Transverse colon (tissue), 4 donors: ENCODE measurements at regions of chr5 and their contacts with region 1.

Region 1: GRCh38 chr5:143403593-143404415 is at the start of gene NR3C1:
- DNase-seq: peak; percentile 88
- H3K4me3 ChIP-seq: peak within 1 kb of the TSS; percentile 64 to 90 (median 86)
- H3K27ac ChIP-seq: peak within 1 kb of the TSS; percentile 96 to 99 (median 98)
- H3K4me1 ChIP-seq: peaks cover 0 to 33% (median 12%) of the 10 kb centered on the region in 4 donors
- H3K27me3 ChIP-seq: peaks cover 3% of the 10 kb centered on the region
- CTCF ChIP-seq: peak in 4 of 5 experiments; percentile 39 to 61 (median 52)
- EP300 ChIP-seq: no peak
- POLR2A ChIP-seq: peak; percentile 56
- total RNA-seq, gene NR3C1: 8.4 to 37.7 (median 30.3) TPM

Region 2: DNA sequence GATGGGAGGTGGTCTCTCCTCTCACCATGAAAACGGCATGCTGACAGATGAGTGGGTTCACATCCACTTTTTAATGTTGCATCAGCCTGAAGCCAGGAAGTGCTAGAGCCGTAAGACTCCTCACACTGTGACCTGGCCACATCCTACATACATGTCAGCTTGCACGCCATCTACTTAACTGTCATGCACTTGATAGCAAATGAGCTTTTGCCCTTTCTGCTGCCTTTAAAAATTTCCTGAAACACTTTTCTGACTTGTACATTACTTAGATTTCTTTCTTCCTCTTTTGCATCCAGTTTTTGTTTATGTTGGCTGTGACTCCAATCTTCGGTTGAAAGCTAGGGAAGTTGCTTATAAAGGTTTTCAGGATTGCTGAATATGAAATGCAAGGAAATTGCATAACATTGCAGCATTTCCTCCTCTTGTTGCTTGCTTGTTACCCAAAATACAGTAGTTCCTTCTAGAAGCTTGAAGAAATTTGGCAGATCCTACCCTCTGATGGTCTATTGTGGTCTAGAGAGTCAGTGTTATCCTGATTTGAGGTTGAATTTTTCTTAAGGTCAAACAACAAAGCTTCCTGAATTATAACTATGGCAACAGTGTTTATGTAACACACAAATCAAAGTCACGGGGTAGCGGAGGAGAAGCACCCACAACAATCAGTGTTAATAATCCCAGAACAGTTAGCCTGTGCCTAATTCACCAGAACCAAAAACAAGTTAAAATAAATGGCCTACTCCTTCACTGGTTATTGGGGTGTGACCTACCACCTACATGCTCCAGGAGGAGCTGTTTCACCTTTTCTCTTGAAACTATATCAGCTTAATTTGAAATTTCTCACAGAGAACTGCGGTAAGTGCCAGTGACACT is 401.1 kb before region 1 on chr5:
- in situ Hi-C with region 1: loop called in 1 of 4 experiments (anchors 25 kb)
- intact Hi-C with region 1: no loop called
- DNase-seq: peak; percentile 54
- H3K4me3 ChIP-seq: no peak overlapping the region
- H3K27ac ChIP-seq: peak overlapping the region; percentile 34 to 71 (median 53)
- H3K4me1 ChIP-seq: peaks cover 0 to 33% (median 10%) of the 10 kb centered on the region in 4 donors
- H3K27me3 ChIP-seq: no peaks in the 10 kb centered on the region
- CTCF ChIP-seq: peak; percentile 29 to 44 (median 36)
- EP300 ChIP-seq: no peak
- POLR2A ChIP-seq: no peak

Region 3: GRCh38 chr5:143023411-143024096 is 380.2 kb before region 1 on chr5:
- in situ Hi-C with region 1: loop called in 1 of 4 experiments (anchors 25 kb)
- intact Hi-C with region 1: loop called (anchors 5 kb)
- DNase-seq: peak; percentile 18
- H3K4me3 ChIP-seq: no peak overlapping the region
- H3K27ac ChIP-seq: peak overlapping the region in 1 of 4 donors; percentile 20
- H3K4me1 ChIP-seq: peaks cover 0 to 8% (median 4%) of the 10 kb centered on the region in 4 donors
- H3K27me3 ChIP-seq: no peaks in the 10 kb centered on the region
- CTCF ChIP-seq: peak in 1 of 5 experiments; percentile 7
- EP300 ChIP-seq: no peak
- POLR2A ChIP-seq: no peak

Region 4: GRCh38 chr5:143222287-143223231 is 181.2 kb before region 1 on chr5:
- in situ Hi-C with region 1: no loop called
- intact Hi-C with region 1: no loop called
- DNase-seq: no peak
- H3K4me3 ChIP-seq: no peak overlapping the region
- H3K27ac ChIP-seq: peak overlapping the region; percentile 17 to 61 (median 42)
- H3K4me1 ChIP-seq: peaks cover 0 to 15% (median 7%) of the 10 kb centered on the region in 4 donors
- H3K27me3 ChIP-seq: no peaks in the 10 kb centered on the region
- CTCF ChIP-seq: no peak
- EP300 ChIP-seq: no peak
- POLR2A ChIP-seq: no peak

Region 5: DNA sequence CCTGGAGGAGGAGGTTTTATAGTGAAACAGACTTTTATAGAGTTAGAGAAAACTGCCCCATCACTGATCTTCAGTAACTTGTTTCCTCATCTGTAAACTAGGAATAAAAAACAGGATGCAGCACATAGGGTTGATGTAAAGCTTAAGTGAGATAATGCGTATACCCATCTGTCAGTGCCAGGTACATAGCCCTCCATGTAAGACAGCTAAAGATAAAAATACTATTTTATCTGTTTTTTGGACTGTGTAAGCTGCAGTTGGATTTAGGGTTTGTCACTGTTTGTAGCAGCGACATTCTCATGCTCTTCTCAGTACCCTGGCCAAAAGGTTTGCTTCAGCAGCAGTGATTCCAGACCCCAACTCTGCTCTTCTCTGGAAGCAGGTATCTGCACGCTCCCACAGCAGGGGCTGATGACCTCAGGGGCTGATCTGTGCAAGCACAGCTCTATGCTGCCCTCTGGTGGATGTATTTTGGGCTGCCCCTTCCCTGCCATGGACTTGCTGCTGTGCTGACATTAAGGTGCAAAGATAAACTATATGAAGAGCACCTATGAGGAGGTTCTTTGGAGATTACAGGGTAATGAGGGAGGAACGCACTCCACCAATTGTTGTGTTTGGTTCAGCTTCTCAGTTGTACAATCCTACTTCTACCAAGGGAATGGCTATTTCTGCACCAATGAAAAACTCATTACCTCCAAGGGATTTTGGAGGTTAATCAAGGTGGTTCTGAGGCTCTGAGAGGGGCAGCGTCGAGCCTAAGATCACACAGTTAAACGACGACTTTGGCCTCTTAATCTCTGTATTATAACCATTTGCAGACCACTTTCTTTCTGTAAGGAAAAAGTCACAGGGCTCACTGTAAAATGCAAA is 421.3 kb after region 1 on chr5:
- in situ Hi-C with region 1: loop called in 1 of 4 experiments (anchors 10 kb)
- intact Hi-C with region 1: no loop called
- DNase-seq: peak; percentile 86
- H3K4me3 ChIP-seq: no peak overlapping the region
- H3K27ac ChIP-seq: no peak overlapping the region
- H3K4me1 ChIP-seq: no peaks in the 10 kb centered on the region
- H3K27me3 ChIP-seq: no peaks in the 10 kb centered on the region
- CTCF ChIP-seq: peak; percentile 86 to 97 (median 94)
- EP300 ChIP-seq: no peak
- POLR2A ChIP-seq: no peak

Region 6: DNA sequence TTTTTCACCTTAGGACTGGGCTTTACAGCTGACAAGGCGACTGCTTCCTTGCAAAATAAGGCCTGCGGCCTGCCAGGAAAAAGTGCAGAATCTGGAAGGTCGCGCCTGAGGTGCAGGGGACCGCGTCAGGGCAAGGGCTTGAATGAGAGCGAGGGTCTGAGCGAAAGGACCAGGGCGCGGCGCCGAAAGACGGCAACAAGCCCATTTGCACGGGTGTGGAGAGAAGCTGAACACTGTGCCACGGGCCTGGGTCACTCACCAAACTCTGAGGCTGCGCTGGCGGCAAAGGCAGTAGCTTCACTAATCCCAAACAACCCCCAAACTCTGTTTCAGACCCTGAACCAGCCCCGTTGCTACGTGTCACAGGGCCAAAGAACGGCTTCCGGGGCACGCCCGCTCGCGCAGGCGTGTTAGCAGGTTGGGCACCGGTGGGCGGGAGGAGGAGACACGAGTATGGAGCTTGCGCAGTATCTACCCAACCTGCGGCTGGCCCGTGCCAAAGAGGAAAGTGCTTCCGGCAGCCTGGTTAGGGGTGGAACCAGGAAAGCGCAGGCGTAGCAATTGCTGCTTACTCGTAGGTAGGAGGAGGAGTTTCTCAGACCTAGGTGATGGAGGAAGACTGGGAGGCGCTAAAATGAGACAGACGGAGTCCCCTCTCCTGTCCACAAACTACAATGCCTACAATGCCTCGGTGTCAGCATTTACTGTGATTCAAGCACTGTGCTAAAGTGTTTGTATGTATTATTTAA is 766.6 kb after region 1 on chr5 and contains the starts of genes KCTD16 and YIPF5:
- in situ Hi-C with region 1: loop called in 1 of 4 experiments (anchors 25 kb)
- intact Hi-C with region 1: no loop called
- DNase-seq: peak; percentile 98
- H3K4me3 ChIP-seq: peak within 1 kb of the TSS; percentile 80 to 89 (median 86)
- H3K27ac ChIP-seq: peak within 1 kb of the TSS; percentile 85 to 88 (median 86)
- H3K4me1 ChIP-seq: peaks cover 6 to 25% (median 16%) of the 10 kb centered on the region in 4 donors
- H3K27me3 ChIP-seq: peaks cover 6% of the 10 kb centered on the region
- CTCF ChIP-seq: no peak
- EP300 ChIP-seq: no peak
- POLR2A ChIP-seq: peak; percentile 83
- total RNA-seq, gene KCTD16: under 0.01 to 0.14 TPM in 2 of 4 donors, not detected in the others
- total RNA-seq, gene YIPF5: 10.1 to 44.4 (median 25.6) TPM